PC-9 (cell line): ENCODE measurements at regions of chr1 and their contacts with region 1.

Region 1: DNA sequence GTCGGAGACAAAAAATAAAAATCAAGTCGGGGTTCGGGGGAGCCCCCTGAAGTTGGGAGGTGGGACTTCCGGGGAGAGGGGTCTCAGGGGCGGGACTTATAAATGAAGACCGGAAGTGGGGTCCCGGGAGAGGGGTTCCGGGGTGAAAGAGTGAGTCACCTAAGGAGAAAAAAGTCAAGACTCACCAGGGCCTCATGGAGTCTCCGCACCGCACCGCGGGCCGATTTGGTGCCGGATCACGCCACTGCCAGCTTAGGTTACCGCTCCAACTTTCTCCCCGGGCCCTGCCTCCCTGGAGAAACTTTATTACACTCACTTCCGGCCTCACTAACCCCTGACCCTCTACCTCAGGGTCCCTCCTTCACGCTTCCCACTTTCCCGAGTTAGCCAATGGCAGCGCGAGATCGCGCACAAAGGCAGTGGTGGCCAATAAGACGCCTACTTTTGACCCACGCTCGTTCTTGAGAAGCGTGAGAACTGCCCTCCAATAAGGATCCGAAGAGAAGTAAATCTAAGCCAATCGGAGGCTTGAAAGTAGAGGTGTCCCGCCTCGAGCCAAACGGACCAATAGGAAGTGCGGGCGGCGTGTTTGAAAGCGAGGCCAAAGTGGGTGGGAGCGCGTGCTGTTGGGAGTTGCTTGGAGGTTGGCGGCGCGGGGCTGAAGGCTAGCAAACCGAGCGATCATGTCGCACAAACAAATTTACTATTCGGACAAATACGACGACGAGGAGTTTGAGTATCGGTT is at the start of gene CKS1B:
- DNase-seq: peak; percentile 96 to 100
- H3K4me3 ChIP-seq: peak within 1 kb of the TSS; percentile 87
- H3K27ac ChIP-seq: peak within 1 kb of the TSS; percentile 97
- H3K4me1 ChIP-seq: peaks cover 48% of the 10 kb centered on the region
- H3K27me3 ChIP-seq: no peaks in the 10 kb centered on the region
- CTCF ChIP-seq: no peak
- total RNA-seq, gene CKS1B: 236 and 300 TPM in 2 replicates

Region 2: GRCh38 chr1:154906621-154907081 is 67.6 kb before region 1 on chr1:
- CTCF ChIA-PET with region 1: interaction called, 22 read pairs
- POLR2A ChIA-PET with region 1: interaction called, 4 read pairs
- intact Hi-C with region 1: no loop called
- DNase-seq: peak in 1 of 2 experiments; percentile 6
- H3K4me3 ChIP-seq: no peak overlapping the region
- H3K27ac ChIP-seq: no peak overlapping the region
- H3K4me1 ChIP-seq: no peaks in the 10 kb centered on the region
- H3K27me3 ChIP-seq: peaks cover 36% of the 10 kb centered on the region
- CTCF ChIP-seq: peak; percentile 60

Region 3: GRCh38 chr1:154961497-154962262 is 12.6 kb before region 1 on chr1 and contains the start of gene PYGO2:
- CTCF ChIA-PET with region 1: interaction called, 3 read pairs
- POLR2A ChIA-PET with region 1: interaction called, 18 read pairs
- intact Hi-C with region 1: no loop called
- DNase-seq: peak; percentile 64 to 88
- H3K4me3 ChIP-seq: peak within 1 kb of the TSS; percentile 78
- H3K27ac ChIP-seq: peak within 1 kb of the TSS; percentile 72
- H3K4me1 ChIP-seq: peaks cover 18% of the 10 kb centered on the region
- H3K27me3 ChIP-seq: no peaks in the 10 kb centered on the region
- CTCF ChIP-seq: peak; percentile 60; the same call in 1 of the 2 replicates
- total RNA-seq, gene PYGO2: 30.0 and 33.2 TPM in 2 replicates

Region 4: DNA sequence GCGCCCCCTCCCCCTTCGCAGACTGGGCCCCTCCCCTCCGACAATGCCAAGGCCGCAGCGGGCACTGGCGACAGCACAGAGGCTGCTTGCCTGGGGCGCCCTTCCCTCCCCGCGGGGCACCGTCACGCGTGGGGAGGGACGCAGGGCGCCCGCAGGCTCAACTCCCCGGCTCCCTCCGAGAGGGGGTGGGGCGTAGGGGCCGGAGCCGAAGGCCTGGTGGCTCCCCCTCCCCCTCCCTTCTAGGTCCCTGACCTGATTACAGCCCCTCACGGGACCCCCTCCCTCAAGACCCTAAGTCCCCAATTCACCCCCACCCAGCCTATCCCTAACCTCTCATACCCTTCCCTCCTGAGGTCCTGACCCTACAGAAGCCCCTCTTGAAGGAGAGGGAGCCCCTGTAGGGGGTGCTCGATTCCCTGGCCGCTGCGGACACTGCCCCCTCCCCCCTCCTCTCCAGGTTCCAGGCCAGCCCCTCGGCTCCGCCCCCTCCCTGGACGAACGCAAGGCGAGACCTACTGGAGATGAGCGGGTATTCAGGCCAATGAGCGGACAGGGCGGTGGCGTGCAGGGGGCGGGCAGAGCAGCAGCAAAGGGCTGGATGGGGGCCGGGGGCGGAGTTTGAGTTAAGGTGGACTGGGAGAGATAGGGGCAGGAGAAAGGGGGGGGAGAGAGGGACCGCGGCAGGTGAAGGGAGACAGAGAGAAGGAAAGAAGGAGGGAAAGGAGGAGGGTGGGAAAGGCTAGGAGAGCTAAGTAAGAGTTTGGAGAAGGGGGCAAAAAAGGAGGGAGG is 27.6 kb after region 1 on chr1:
- CTCF ChIA-PET with region 1: no interaction called
- POLR2A ChIA-PET with region 1: interaction called, 8 read pairs
- intact Hi-C with region 1: loop called (anchors 1 kb)
- DNase-seq: peak; percentile 96 to 99
- H3K4me3 ChIP-seq: peak overlapping the region; percentile 80
- H3K27ac ChIP-seq: peak overlapping the region; percentile 72
- H3K4me1 ChIP-seq: peaks cover 20% of the 10 kb centered on the region
- H3K27me3 ChIP-seq: no peaks in the 10 kb centered on the region
- CTCF ChIP-seq: peak; percentile 68; the same call in 1 of the 2 replicates

Region 5: GRCh38 chr1:155022927-155023236 is 48.6 kb after region 1 on chr1:
- CTCF ChIA-PET with region 1: interaction called, 17 read pairs
- POLR2A ChIA-PET with region 1: interaction called, 28 read pairs
- intact Hi-C with region 1: no loop called
- DNase-seq: peak in 1 of 2 experiments; percentile 55
- H3K4me3 ChIP-seq: no peak overlapping the region
- H3K27ac ChIP-seq: no peak overlapping the region
- H3K4me1 ChIP-seq: peaks cover 62% of the 10 kb centered on the region
- H3K27me3 ChIP-seq: no peaks in the 10 kb centered on the region
- CTCF ChIP-seq: no peak

Region 6: GRCh38 chr1:155135415-155136028 is 161.3 kb after region 1 on chr1 and contains the start of gene SLC50A1:
- CTCF ChIA-PET with region 1: no interaction called
- POLR2A ChIA-PET with region 1: no interaction called
- intact Hi-C with region 1: loop called (anchors 5 kb)
- DNase-seq: peak; percentile 80 to 94
- H3K4me3 ChIP-seq: peak within 1 kb of the TSS; percentile 78
- H3K27ac ChIP-seq: peak within 1 kb of the TSS; percentile 99
- H3K4me1 ChIP-seq: peaks cover 54% of the 10 kb centered on the region
- H3K27me3 ChIP-seq: no peaks in the 10 kb centered on the region
- CTCF ChIP-seq: 0 out of 2 replicates have a peak, but pooled peaks have one; percentile 15
- total RNA-seq, gene SLC50A1: 54.9 and 67.6 TPM in 2 replicates